Activated CD4-positive, alpha-beta memory T cell treated with anti-CD3 and anti-CD28 coated beads for 36 hours (primary cell): ENCODE measurements at regions of chr18 and their contacts with region 1.

Region 1: GRCh38 chr18:48834413-48835031 is 116.2 kb downstream of the SMAD7 start:
- DNase-seq: peak; percentile 89
- H3K4me3 Mint-ChIP-seq: peak overlapping the region; percentile 77
- H3K27ac Mint-ChIP-seq: peak overlapping the region; percentile 92
- H3K4me1 Mint-ChIP-seq: peaks cover 83% of the 10 kb centered on the region
- H3K27me3 Mint-ChIP-seq: no peaks in the 10 kb centered on the region

Region 2: GRCh38 chr18:47912343-47912742 is 922.2 kb before region 1 on chr18:
- CTCF ChIA-PET with region 1: no interaction called
- POLR2A ChIA-PET with region 1: no interaction called
- intact Hi-C with region 1: loop called (anchors 10 kb)
- DNase-seq: peak; percentile 51
- H3K4me3 Mint-ChIP-seq: peak overlapping the region; percentile 45
- H3K27ac Mint-ChIP-seq: peak overlapping the region; percentile 90
- H3K4me1 Mint-ChIP-seq: peaks cover 98% of the 10 kb centered on the region
- H3K27me3 Mint-ChIP-seq: no peaks in the 10 kb centered on the region

Region 3: GRCh38 chr18:48663931-48664847 is 170.3 kb before region 1 on chr18:
- CTCF ChIA-PET with region 1: no interaction called
- POLR2A ChIA-PET with region 1: no interaction called
- intact Hi-C with region 1: no loop called
- DNase-seq: peak; percentile 69
- H3K4me3 Mint-ChIP-seq: no peak overlapping the region
- H3K27ac Mint-ChIP-seq: no peak overlapping the region
- H3K4me1 Mint-ChIP-seq: no peaks in the 10 kb centered on the region
- H3K27me3 Mint-ChIP-seq: no peaks in the 10 kb centered on the region

Region 4: DNA sequence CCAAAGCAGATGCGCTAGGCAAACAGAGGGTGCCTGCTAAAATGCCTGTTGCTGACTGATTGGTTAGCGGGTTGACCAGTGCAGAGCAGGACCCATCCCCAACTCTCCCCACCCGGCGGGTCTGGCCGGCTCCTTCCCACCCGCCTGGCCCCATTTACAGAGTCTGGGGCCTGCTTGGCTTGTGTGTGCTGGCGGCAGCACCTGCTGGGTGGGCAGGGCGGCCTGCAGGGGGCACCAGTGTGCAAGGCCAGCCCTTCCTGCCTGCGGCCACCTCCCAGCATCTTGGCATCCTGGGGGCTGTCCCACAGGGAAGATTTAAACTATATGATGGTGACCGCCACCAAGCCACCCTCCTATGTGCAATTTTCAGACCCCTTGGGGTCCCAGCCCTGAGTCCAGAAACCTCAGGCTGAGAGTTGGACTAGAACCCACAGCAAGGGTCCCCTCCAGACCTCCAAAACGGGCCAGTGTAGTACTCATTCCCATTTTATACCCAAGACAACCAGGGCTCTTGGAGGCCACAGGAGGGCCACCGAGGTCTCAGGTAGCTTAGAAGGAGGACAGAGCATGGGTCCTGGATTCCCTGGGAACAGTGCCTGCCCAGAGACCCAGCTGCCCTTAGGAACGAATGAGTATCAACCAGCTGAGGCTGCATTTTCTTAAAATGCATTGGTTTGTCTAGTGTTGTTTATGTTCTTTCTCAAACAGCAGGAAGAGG is 57.3 kb before region 1 on chr18:
- CTCF ChIA-PET with region 1: interaction called, 7 read pairs
- POLR2A ChIA-PET with region 1: no interaction called
- intact Hi-C with region 1: loop called (anchors 2 kb)
- DNase-seq: peak; percentile 80
- H3K4me3 Mint-ChIP-seq: no peak overlapping the region
- H3K27ac Mint-ChIP-seq: no peak overlapping the region
- H3K4me1 Mint-ChIP-seq: peaks cover 7% of the 10 kb centered on the region
- H3K27me3 Mint-ChIP-seq: no peaks in the 10 kb centered on the region

Region 5: GRCh38 chr18:48800876-48801727 is 33.4 kb before region 1 on chr18:
- CTCF ChIA-PET with region 1: interaction called, 3 read pairs
- POLR2A ChIA-PET with region 1: interaction called, 7 read pairs
- intact Hi-C with region 1: loop called (anchors 1 kb)
- DNase-seq: peak; percentile 40
- H3K4me3 Mint-ChIP-seq: no peak overlapping the region
- H3K27ac Mint-ChIP-seq: peak overlapping the region; percentile 61
- H3K4me1 Mint-ChIP-seq: peaks cover 51% of the 10 kb centered on the region
- H3K27me3 Mint-ChIP-seq: no peaks in the 10 kb centered on the region

Region 6: GRCh38 chr18:48813833-48814489 is 20.6 kb before region 1 on chr18:
- CTCF ChIA-PET with region 1: no interaction called
- POLR2A ChIA-PET with region 1: interaction called, 30 read pairs
- intact Hi-C with region 1: loop called (anchors 1 kb)
- DNase-seq: peak; percentile 37
- H3K4me3 Mint-ChIP-seq: no peak overlapping the region
- H3K27ac Mint-ChIP-seq: peak overlapping the region; percentile 80
- H3K4me1 Mint-ChIP-seq: peaks cover 49% of the 10 kb centered on the region
- H3K27me3 Mint-ChIP-seq: no peaks in the 10 kb centered on the region

Region 7: DNA sequence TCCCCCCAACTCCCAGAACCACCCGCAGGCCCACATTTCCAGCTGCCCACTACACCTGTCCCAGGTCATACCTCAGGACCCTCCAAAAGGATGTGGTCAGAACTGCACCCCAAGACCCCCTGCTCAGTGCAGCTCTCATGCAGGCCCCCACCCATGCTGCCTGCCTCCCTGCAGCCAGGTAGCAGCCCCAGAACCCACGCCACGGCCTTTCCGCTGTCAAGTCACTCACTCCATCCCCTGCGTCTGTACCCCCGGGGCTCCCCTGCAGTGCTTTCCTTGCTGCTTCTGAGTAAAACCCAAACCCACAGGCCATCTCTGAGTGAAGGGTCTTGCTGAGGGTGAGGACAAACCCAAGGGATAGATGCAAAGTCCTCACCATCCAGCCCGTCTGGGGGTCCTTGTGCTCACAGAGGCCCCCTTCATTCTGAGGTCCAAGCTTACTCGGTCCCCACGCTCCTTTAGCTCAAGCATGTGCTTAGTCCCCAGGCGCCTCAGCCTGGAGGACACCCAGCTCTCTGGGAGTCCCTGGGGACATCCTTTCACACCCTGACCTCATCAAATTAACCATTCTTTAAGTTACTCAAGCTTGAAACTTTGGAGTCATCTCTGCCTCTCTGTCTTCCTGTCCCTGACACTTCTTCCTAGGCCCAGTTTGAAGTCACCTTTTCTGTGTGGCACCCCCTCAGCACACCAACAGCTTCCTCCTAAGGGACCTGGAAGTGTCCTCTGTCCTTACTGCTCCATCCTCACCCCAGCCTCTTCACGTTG is 13.9 kb before region 1 on chr18:
- CTCF ChIA-PET with region 1: no interaction called
- POLR2A ChIA-PET with region 1: interaction called, 30 read pairs
- intact Hi-C with region 1: loop called (anchors 1 kb)
- DNase-seq: peak; percentile 59
- H3K4me3 Mint-ChIP-seq: no peak overlapping the region
- H3K27ac Mint-ChIP-seq: peak overlapping the region; percentile 42
- H3K4me1 Mint-ChIP-seq: peaks cover 36% of the 10 kb centered on the region
- H3K27me3 Mint-ChIP-seq: no peaks in the 10 kb centered on the region

Region 8: DNA sequence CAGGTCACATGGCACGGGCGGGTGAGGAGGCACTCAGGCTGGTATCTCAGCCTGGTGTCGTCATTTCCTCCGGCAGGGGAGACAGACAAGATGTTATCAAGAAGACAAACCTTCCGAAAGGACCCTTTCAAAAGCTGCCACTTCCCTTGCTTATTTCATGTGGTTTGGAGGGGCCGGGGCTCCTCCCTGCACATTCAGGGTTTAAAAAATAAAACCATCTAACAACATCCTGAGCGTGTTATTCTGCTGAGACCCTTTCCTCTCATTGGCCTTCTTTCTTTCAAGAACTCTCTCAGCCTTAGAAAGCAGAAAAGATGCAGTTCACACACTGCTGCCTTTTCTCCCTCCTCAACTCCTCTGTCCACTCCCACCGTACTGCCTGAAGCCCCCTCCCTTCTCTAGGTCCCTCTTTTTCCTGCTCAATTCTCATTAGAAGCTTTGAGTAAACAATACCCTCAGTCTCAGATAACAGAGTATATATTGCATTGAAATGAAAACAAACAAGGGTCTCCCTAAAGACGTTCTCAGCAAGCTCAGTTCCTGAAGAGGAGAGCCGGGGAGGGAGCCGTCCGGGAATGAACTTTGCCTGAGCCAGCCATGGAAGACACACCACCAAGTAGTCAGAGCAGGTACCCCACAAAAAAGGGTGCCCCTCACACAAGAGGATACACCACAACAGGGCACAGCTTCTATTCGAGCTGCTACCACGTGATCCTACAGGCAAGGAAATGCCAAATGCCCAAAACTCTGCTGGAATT is 106.5 kb after region 1 on chr18:
- CTCF ChIA-PET with region 1: no interaction called
- POLR2A ChIA-PET with region 1: no interaction called
- intact Hi-C with region 1: loop called (anchors 1 kb)
- DNase-seq: peak; percentile 82
- H3K4me3 Mint-ChIP-seq: peak overlapping the region; percentile 60
- H3K27ac Mint-ChIP-seq: peak overlapping the region; percentile 82
- H3K4me1 Mint-ChIP-seq: peaks cover 88% of the 10 kb centered on the region
- H3K27me3 Mint-ChIP-seq: no peaks in the 10 kb centered on the region